PC-3 (cell line): ENCODE measurements at regions of chrX and their contacts with region 1.

Region 1: GRCh38 chrX:38768079-38768478 is 33.2 kb upstream of the MID1IP1 start:
- DNase-seq: peak; percentile 52
- ATAC-seq: peak; percentile 65
- H3K4me3 ChIP-seq: no peak overlapping the region
- H3K27ac ChIP-seq: no peak overlapping the region
- H3K4me1 ChIP-seq: no peaks in the 10 kb centered on the region
- H3K27me3 ChIP-seq: no peaks in the 10 kb centered on the region
- CTCF ChIP-seq: peak; percentile 67

Region 2: DNA sequence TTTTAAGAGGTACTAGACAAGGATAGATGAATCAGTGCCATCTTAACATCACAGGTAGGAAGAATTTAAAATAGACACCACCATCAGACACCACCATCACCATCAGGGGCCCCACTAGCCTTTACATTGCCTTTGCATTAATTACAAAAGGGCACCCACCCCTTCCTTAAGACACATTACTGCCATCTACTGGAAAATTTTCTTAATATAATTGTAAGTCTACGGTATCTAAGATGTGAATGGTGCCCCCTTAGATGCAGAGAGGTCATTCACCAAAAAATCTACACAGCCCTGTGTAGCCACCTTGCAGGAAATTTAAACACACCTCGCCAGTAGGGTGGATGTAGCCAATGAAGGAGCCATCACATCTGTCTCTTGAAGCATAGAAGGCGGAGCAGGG is 217.3 kb after region 1 on chrX:
- CTCF ChIA-PET with region 1: no interaction called
- POLR2A ChIA-PET with region 1: no interaction called
- intact Hi-C with region 1: loop called (anchors 1 kb)
- DNase-seq: peak; percentile 58
- ATAC-seq: peak; percentile 54
- H3K4me3 ChIP-seq: no peak overlapping the region
- H3K27ac ChIP-seq: no peak overlapping the region
- H3K4me1 ChIP-seq: peaks cover 18% of the 10 kb centered on the region
- H3K27me3 ChIP-seq: no peaks in the 10 kb centered on the region
- CTCF ChIP-seq: peak; percentile 60

Region 3: GRCh38 chrX:39149761-39150160 is 381.7 kb after region 1 on chrX:
- CTCF ChIA-PET with region 1: no interaction called
- POLR2A ChIA-PET with region 1: no interaction called
- intact Hi-C with region 1: loop called (anchors 10 kb)
- DNase-seq: peak; percentile 64
- ATAC-seq: no peak
- H3K4me3 ChIP-seq: no peak overlapping the region
- H3K27ac ChIP-seq: no peak overlapping the region
- H3K4me1 ChIP-seq: peaks cover 14% of the 10 kb centered on the region
- H3K27me3 ChIP-seq: no peaks in the 10 kb centered on the region
- CTCF ChIP-seq: peak; percentile 74

Region 4: GRCh38 chrX:39242187-39242586 is 474.1 kb after region 1 on chrX:
- CTCF ChIA-PET with region 1: no interaction called
- POLR2A ChIA-PET with region 1: no interaction called
- intact Hi-C with region 1: loop called (anchors 5 kb)
- DNase-seq: peak; percentile 59
- ATAC-seq: peak; percentile 27; the same call in 1 of the 2 replicates
- H3K4me3 ChIP-seq: no peak overlapping the region
- H3K27ac ChIP-seq: no peak overlapping the region
- H3K4me1 ChIP-seq: no peaks in the 10 kb centered on the region
- H3K27me3 ChIP-seq: no peaks in the 10 kb centered on the region
- CTCF ChIP-seq: peak; percentile 78